Activated T-helper 1 cell treated with anti-CD3 and anti-CD28 coated beads, Interleukin-12 subunit alpha, Interleukin-12 subunit beta, Interleukin-2, Interleukin-4 antibody, amounts not matched to agents 30 ng/mL and 10 ng/mL and 1 ng/mL, durations not matched to agents 14 hours and 24 hours and 36 hours (primary cell): ENCODE measurements at regions of chr5 and their contacts with region 1.

Region 1: GRCh38 chr5:132272311-132273210 is 15.1 kb downstream of the PDLIM4 start:
- DNase-seq: peak; percentile 33
- H3K4me3 Mint-ChIP-seq: no peak overlapping the region
- H3K27ac Mint-ChIP-seq: no peak overlapping the region
- H3K4me1 Mint-ChIP-seq: peaks cover 5% of the 10 kb centered on the region
- H3K27me3 Mint-ChIP-seq: peaks cover 12% of the 10 kb centered on the region

Region 2: GRCh38 chr5:132293066-132293991 is 20.8 kb after region 1 on chr5:
- intact Hi-C with region 1: loop called (anchors 2 kb)
- DNase-seq: peak; percentile 53
- H3K4me3 Mint-ChIP-seq: peak overlapping the region; percentile 93
- H3K27ac Mint-ChIP-seq: peak overlapping the region; percentile 75
- H3K4me1 Mint-ChIP-seq: peaks cover 30% of the 10 kb centered on the region
- H3K27me3 Mint-ChIP-seq: peaks cover 15% of the 10 kb centered on the region

Region 3: GRCh38 chr5:132500931-132501630 is 228.5 kb after region 1 on chr5:
- intact Hi-C with region 1: loop called (anchors 1 kb)
- DNase-seq: peak; percentile 66
- H3K4me3 Mint-ChIP-seq: no peak overlapping the region
- H3K27ac Mint-ChIP-seq: peak overlapping the region; percentile 72
- H3K4me1 Mint-ChIP-seq: peaks cover 54% of the 10 kb centered on the region
- H3K27me3 Mint-ChIP-seq: peaks cover 6% of the 10 kb centered on the region